PC-3 (cell line): ENCODE measurements at regions of chr11 and their contacts with region 1.

Region 1: DNA sequence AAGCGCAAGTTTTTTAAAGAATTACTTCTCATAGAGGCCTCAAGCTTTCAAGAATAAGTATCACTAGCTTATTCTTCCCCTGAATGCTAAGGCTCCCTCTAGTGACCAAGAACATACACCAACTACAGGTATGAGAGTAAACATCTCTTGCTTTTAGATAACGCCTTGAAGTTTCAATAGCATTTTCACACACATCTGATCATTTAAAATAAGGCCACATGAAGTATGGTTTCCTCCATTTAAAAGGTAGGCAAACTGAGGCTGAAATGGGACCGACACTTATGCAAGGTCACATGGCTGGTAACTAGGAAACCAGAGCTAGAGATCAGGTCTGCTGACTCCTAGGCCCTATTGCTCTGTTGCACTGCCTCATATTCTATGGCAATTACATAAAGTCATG is 66.5 kb downstream of the CCDC34 start:
- DNase-seq: peak; percentile 74
- ATAC-seq: peak; percentile 75
- H3K4me3 ChIP-seq: no peak overlapping the region
- H3K27ac ChIP-seq: no peak overlapping the region
- H3K4me1 ChIP-seq: peaks cover 17% of the 10 kb centered on the region
- H3K27me3 ChIP-seq: no peaks in the 10 kb centered on the region
- CTCF ChIP-seq: peak; percentile 87

Region 2: GRCh38 chr11:27158722-27159679 is 137.5 kb before region 1 on chr11:
- CTCF ChIA-PET with region 1: interaction called, 23 read pairs
- POLR2A ChIA-PET with region 1: no interaction called
- intact Hi-C with region 1: no loop called
- DNase-seq: peak; percentile 76
- ATAC-seq: peak; percentile 83
- H3K4me3 ChIP-seq: no peak overlapping the region
- H3K27ac ChIP-seq: no peak overlapping the region
- H3K4me1 ChIP-seq: no peaks in the 10 kb centered on the region
- H3K27me3 ChIP-seq: no peaks in the 10 kb centered on the region
- CTCF ChIP-seq: peak; percentile 77

Region 3: DNA sequence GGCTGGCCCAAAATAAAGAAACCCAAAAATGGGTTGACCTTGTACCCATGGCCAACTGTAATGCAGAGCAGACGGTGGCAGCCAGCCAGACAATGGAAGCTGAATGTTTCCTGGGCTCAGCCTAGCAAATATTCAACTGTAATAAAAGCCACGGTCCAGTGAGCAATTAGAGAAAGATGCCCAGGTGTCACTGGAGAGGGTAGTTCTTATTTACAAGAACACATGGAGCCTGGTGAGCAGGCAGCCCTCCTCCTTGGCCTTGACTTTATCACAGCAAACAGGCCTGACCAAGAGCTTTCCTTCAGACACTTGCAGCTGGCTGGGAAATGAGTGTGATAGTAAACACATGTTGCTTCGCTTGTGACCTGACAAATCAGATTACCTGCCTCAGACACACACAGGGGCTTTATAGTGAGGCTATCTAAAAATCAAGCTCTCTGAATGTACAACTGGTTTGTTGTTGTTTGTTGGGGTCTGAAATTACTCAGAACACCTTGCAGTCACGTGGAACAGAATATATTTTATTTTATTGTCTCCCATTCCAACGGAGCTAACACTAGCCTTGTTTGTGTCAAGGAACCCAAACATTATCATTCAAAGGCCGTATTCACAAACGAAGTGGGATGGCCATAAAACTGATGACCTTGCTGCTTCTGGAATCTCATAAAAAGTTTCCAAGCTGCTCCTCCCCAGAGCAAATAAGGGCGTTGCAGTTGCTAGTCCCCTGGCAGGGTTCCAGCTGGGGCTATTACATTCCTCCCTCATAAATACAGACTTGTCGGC is 94.9 kb before region 1 on chr11:
- CTCF ChIA-PET with region 1: interaction called, 10 read pairs
- POLR2A ChIA-PET with region 1: no interaction called
- intact Hi-C with region 1: loop called (anchors 2 kb)
- DNase-seq: peak; percentile 96
- ATAC-seq: peak; percentile 80
- H3K4me3 ChIP-seq: peak overlapping the region; percentile 22; the same call in 1 of the 2 replicates
- H3K27ac ChIP-seq: peak overlapping the region; percentile 91
- H3K4me1 ChIP-seq: peaks cover 36% of the 10 kb centered on the region
- H3K27me3 ChIP-seq: no peaks in the 10 kb centered on the region
- CTCF ChIP-seq: no peak

Region 4: GRCh38 chr11:27234043-27234668 is 62.3 kb before region 1 on chr11:
- CTCF ChIA-PET with region 1: no interaction called
- POLR2A ChIA-PET with region 1: no interaction called
- intact Hi-C with region 1: no loop called
- DNase-seq: peak; percentile 56
- ATAC-seq: peak; percentile 85
- H3K4me3 ChIP-seq: no peak overlapping the region
- H3K27ac ChIP-seq: no peak overlapping the region
- H3K4me1 ChIP-seq: peaks cover 6% of the 10 kb centered on the region; the same call in 1 of the 2 replicates
- H3K27me3 ChIP-seq: no peaks in the 10 kb centered on the region
- CTCF ChIP-seq: no peak; the same call in 1 of the 2 replicates

Region 5: DNA sequence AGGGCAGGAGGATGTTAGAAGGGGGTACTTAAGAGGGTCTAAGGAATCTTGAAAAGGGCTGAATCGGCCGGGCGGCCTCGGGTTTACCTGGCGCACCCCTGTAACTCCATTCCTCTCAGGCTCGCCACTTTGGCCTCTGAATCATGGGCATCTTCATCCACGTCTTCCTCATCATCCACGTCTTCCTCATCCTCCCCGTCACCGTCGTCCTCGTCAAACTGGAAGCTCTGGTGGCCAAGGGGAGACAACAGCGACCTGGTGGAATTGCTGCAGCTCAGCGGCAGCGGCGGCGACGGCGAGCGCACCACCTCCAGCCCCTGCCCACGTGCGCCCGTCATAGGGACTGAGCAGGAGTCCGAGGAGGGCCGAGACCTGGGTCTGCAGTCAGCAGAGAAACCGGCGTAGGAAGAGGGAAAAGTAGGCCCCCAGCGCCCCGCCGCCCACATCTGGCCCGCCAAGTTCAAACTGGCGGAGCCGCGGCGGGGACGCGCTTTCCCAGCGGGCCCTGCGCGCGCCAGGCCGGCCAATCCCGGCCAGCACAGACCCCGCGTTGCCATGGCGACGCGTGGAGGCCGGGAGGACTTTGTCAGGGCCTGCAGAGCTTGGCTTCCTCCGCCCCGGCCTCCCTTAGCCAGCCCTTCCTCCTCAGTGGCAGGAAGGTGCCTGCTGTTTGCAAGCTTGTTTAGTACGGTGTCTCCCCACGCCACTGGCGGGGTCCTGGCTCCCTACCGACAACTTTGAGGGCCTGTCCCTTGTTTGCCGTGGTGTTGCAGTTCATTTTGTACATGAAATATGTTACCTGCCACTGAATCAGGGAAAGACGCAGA is 66.5 kb after region 1 on chr11 and contains the start of gene CCDC34:
- CTCF ChIA-PET with region 1: interaction called, 3 read pairs
- POLR2A ChIA-PET with region 1: interaction called, 3 read pairs
- intact Hi-C with region 1: loop called (anchors 2 kb)
- DNase-seq: peak; percentile 93
- ATAC-seq: peak; percentile 92
- H3K4me3 ChIP-seq: peak within 1 kb of the TSS; percentile 97
- H3K27ac ChIP-seq: peak within 1 kb of the TSS; percentile 40
- H3K4me1 ChIP-seq: peaks cover 23% of the 10 kb centered on the region
- H3K27me3 ChIP-seq: no peaks in the 10 kb centered on the region
- CTCF ChIP-seq: no peak
- total RNA-seq, gene CCDC34: 9.0 and 11.0 TPM in 2 replicates

Region 6: DNA sequence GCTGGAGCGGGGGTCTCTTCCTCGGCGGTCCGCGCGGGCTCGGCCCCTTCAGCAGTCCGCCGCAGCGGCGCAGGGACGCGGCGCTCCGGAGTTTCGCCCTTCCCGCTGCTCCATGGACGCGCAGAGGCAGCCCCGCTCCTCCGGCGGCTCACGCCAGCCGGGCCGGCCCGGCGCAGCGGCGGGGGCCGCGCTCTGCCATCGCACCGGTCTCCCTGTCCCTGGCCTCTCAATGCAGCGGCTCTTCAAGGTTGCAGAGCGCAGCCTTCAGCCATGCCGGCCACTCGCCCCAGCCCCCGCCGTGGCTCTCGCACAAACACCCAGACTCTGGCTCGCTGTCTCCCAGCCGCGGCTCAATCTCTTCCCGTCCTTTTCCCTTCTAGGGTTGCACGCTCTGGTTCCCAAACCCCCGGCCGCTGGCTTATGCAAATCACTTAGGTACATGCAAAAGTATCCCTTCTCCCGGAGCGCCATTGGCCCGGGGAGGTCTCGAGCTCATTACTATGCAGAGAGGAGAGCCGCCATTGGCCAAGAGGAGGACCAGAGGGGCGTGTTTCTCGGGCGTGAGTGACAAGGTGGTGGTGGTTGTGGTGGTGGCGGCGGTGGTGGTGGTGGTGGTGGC is 176.0 kb after region 1 on chr11 and contains the start of gene LGR4:
- CTCF ChIA-PET with region 1: interaction called, 3 read pairs
- POLR2A ChIA-PET with region 1: interaction called, 19 read pairs
- intact Hi-C with region 1: loop called (anchors 5 kb)
- DNase-seq: peak; percentile 95
- ATAC-seq: peak; percentile 79
- H3K4me3 ChIP-seq: peak within 1 kb of the TSS; percentile 81
- H3K27ac ChIP-seq: peak within 1 kb of the TSS; percentile 27; the same call in 1 of the 2 replicates
- H3K4me1 ChIP-seq: peaks cover 36% of the 10 kb centered on the region
- H3K27me3 ChIP-seq: no peaks in the 10 kb centered on the region
- CTCF ChIP-seq: no peak
- total RNA-seq, gene LGR4: 13.5 and 14.5 TPM in 2 replicates